Activated CD4-positive, alpha-beta memory T cell treated with anti-CD3 and anti-CD28 coated beads, Interleukin-2, amount 10 ng/mL, durations not matched to agents 7 days and 5 days (primary cell): ENCODE measurements at regions of chr1 and their contacts with region 1.

Region 1: GRCh38 chr1:24481101-24481500 is 21.5 kb upstream of the RCAN3 start:
- DNase-seq: peak; percentile 65
- H3K4me3 Mint-ChIP-seq: peak overlapping the region; percentile 27
- H3K27ac Mint-ChIP-seq: peak overlapping the region; percentile 99
- H3K4me1 Mint-ChIP-seq: peaks cover 50% of the 10 kb centered on the region
- H3K27me3 Mint-ChIP-seq: no peaks in the 10 kb centered on the region

Region 2: DNA sequence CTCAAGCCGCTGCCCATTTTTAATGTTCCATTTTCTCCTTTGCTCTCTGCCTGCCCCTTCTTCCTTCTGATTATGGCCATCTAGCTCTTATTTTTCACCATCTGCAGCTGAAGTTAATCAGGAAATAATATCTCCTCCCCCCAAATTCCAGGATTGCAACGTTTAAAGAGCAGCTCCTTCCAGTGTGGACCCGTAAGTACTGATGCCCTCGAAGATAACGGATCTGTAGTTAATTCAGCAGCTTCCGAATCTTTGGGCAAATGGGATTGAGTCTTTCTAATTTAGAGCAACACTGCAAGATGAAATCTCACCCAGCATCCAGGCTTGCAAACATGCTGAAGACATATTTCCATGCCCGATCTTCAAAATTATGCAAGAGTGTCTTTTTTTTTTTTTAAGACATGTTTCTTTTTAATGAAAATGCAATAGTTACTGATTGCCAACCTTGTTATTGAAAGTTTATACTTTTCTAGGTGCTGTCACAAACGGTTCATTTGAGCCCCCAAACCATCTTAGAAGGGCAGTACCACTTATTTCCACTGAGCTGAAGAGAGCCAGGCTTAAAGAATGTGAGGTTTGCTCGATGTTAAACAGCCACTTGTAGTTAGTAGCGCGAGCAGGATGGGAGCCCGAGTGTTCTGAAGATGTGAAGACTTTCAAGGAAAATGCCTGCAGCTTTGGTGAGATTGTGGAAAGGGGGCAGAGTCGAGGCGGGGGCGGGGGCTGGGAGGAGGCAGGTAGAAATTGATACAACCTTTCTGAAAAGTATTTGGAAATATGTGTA is 10.7 kb after region 1 on chr1:
- CTCF ChIA-PET with region 1: interaction called, 6 read pairs
- POLR2A ChIA-PET with region 1: interaction called, 19 read pairs
- DNase-seq: no peak
- H3K4me3 Mint-ChIP-seq: no peak overlapping the region
- H3K27ac Mint-ChIP-seq: no peak overlapping the region
- H3K4me1 Mint-ChIP-seq: peaks cover 16% of the 10 kb centered on the region
- H3K27me3 Mint-ChIP-seq: peaks cover 3% of the 10 kb centered on the region

Region 3: DNA sequence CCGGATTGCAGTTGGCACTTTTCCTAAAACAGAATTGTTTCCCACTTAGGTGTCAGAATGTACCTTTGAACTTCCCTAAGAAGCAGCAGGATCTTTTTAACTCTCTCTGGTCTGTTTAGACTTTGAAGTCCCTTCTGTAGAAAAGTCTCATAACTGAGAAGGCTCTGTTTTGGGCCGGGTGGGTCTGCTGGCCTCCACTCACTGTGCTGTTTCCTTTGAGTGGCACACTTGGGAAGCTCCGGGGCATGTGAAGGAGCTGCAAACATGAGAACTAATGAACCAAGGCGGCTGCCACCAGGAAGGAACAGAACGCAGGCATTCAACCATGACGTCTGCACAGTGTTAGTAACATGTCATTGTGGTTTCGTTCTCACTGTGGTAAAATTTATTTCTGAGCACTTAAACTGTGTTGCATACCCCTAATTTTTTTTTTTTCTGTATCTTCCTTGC is 55.3 kb after region 1 on chr1:
- CTCF ChIA-PET with region 1: interaction called, 4 read pairs
- POLR2A ChIA-PET with region 1: interaction called, 20 read pairs
- DNase-seq: peak; percentile 75
- H3K4me3 Mint-ChIP-seq: peak overlapping the region; percentile 73
- H3K27ac Mint-ChIP-seq: peak overlapping the region; percentile 98
- H3K4me1 Mint-ChIP-seq: peaks cover 74% of the 10 kb centered on the region
- H3K27me3 Mint-ChIP-seq: no peaks in the 10 kb centered on the region

Region 4: GRCh38 chr1:24541711-24542346 is 60.7 kb after region 1 on chr1:
- CTCF ChIA-PET with region 1: interaction called, 4 read pairs
- POLR2A ChIA-PET with region 1: interaction called, 20 read pairs
- DNase-seq: peak; percentile 47
- H3K4me3 Mint-ChIP-seq: no peak overlapping the region
- H3K27ac Mint-ChIP-seq: peak overlapping the region; percentile 81
- H3K4me1 Mint-ChIP-seq: peaks cover 66% of the 10 kb centered on the region
- H3K27me3 Mint-ChIP-seq: no peaks in the 10 kb centered on the region